T-cell (primary cell): ENCODE measurements at regions of chr15 and their contacts with region 1.

Region 1: DNA sequence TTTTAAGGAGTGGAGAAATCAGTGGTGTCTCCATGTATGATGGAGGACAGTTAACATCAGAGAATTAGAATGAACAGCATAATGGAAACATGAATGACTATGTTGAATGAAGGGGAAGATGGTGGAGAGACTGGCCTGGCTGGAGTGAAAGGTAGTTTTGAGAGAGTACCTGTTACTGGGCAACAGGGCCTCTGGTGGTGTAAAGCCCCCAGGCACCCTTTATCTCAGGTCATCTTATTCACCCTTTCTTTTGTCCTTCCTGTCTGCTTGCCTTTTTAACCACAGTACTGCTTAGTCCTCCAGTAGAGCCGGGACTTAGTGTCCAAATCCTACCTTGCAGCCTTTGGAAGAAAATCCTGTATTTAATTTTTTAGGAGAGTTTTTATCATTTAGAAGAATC is 6.2 kb downstream of the IREB2 start:
- DNase-seq: no peak
- ATAC-seq: no peak
- H3K4me3 ChIP-seq: no peak overlapping the region
- H3K4me3 Mint-ChIP-seq: no peak overlapping the region
- H3K27ac ChIP-seq: no peak overlapping the region
- H3K27ac Mint-ChIP-seq: peak overlapping the region in 1 of 2 donors; percentile 27
- H3K4me1 ChIP-seq: peaks cover 10 to 23% of the 10 kb centered on the region in 2 experiments
- H3K4me1 Mint-ChIP-seq: peaks cover 72 to 80% (median 77%) of the 10 kb centered on the region in 3 donors
- H3K27me3 ChIP-seq: no peaks in the 10 kb centered on the region
- H3K27me3 Mint-ChIP-seq: no peaks in the 10 kb centered on the region

Region 2: GRCh38 chr15:78396976-78397375 is 47.3 kb before region 1 on chr15:
- CTCF ChIA-PET with region 1: interaction called in 1 of 2 experiments, 14 read pairs
- POLR2A ChIA-PET with region 1: no interaction called
- DNase-seq: no peak
- ATAC-seq: no peak
- H3K4me3 ChIP-seq: no peak overlapping the region
- H3K4me3 Mint-ChIP-seq: no peak overlapping the region
- H3K27ac ChIP-seq: no peak overlapping the region
- H3K27ac Mint-ChIP-seq: no peak overlapping the region
- H3K4me1 ChIP-seq: no peaks in the 10 kb centered on the region
- H3K4me1 Mint-ChIP-seq: no peaks in the 10 kb centered on the region
- H3K27me3 ChIP-seq: peaks cover 0 to 9% of the 10 kb centered on the region in 2 experiments
- H3K27me3 Mint-ChIP-seq: peaks cover 0 to 2% of the 10 kb centered on the region in 2 donors